ENCODE measurements at regions of chr1 and their contacts with region 1.

Region 1: GRCh38 chr1:201023517-201023902 is at the start of gene KIF21B:
- DNase-seq: peak; percentile 91
- H3K4me3 Mint-ChIP-seq: peak within 1 kb of the TSS; percentile 90
- H3K27ac Mint-ChIP-seq: peak within 1 kb of the TSS; percentile 100
- H3K4me1 Mint-ChIP-seq: peaks cover 72% of the 10 kb centered on the region
- H3K27me3 Mint-ChIP-seq: no peaks in the 10 kb centered on the region
- total RNA-seq, gene KIF21B: 45.5 to 46.3 TPM

Region 2: DNA sequence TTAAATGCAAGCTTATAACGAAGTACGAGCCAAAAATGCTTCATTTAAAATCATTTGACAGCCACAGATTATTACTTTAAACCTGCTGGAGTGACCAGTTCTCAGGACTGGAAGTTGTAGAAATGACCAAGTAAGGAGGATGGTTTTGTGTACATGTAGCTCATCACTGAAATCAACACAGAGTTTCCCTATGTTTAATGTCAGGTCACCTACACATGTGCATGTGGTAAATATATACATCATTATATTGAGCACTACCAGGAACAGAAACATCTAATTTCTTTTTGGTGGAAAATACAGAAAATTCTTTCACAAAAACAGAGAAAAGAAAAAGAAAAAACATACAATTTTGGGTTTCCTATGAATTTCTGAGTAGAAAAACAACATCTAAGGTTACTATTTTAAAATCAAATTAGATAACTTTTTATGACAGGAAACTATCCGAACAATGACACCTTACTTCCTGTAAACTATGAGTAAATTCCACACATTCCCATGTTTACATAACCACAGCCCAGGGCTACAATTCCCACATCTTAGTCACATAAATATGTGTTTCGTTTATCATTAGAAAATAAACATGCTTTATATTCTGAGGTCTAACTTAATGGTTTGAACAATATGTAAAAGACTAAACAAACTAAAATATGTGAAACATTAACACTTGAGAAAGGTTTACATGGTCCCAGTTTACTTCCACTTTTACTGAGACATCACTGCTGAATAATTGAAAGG is 687.2 kb before region 1 on chr1:
- CTCF ChIA-PET with region 1: no interaction called
- intact Hi-C with region 1: no loop called
- DNase-seq: no peak
- H3K4me3 Mint-ChIP-seq: no peak overlapping the region
- H3K27ac Mint-ChIP-seq: no peak overlapping the region
- H3K4me1 Mint-ChIP-seq: peaks cover 24% of the 10 kb centered on the region
- H3K27me3 Mint-ChIP-seq: no peaks in the 10 kb centered on the region

Region 3: DNA sequence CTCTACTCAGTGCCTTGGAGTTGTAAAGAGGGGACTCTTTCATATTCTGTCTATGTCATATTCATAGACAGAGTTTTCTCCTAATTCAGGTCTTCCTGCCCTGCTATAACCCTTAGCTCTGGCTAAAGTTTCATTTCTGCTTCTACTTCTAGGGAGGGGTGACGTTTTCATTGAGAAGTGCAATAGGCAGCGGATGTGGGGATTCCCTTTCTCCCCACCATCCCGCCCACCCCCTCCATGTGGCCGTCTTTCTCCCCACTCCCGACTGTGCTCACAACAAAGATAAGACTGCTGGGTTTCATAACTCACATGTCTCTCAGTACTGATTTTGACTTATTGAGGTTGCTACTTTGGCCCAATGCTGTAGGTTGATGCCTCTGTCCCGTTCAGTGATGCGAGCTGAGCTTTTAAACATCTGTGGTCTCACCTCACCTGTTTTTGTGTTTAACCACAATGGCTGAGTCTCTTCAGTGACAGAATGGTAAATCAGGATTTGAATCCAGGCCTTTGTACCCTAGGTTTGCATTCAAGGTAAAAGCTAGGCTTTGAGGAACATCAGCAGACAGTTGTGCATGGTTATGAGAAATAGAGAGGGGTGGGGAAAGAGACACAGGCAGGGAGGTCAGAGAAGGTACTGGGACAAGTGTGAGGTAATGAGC is 395.2 kb before region 1 on chr1:
- CTCF ChIA-PET with region 1: interaction called, 3 read pairs
- intact Hi-C with region 1: loop called (anchors 1 kb)
- DNase-seq: peak; percentile 43
- H3K4me3 Mint-ChIP-seq: no peak overlapping the region
- H3K27ac Mint-ChIP-seq: no peak overlapping the region
- H3K4me1 Mint-ChIP-seq: peaks cover 32% of the 10 kb centered on the region
- H3K27me3 Mint-ChIP-seq: no peaks in the 10 kb centered on the region

Region 4: GRCh38 chr1:200888349-200888838 is 135.1 kb before region 1 on chr1:
- CTCF ChIA-PET with region 1: interaction called, 3 read pairs
- intact Hi-C with region 1: loop called (anchors 1 kb)
- DNase-seq: peak; percentile 85
- H3K4me3 Mint-ChIP-seq: no peak overlapping the region
- H3K27ac Mint-ChIP-seq: no peak overlapping the region
- H3K4me1 Mint-ChIP-seq: peaks cover 46% of the 10 kb centered on the region
- H3K27me3 Mint-ChIP-seq: peaks cover 25% of the 10 kb centered on the region

Region 5: GRCh38 chr1:201001960-201002359 is 21.6 kb before region 1 on chr1:
- CTCF ChIA-PET with region 1: interaction called, 7 read pairs
- intact Hi-C with region 1: loop called (anchors 1 kb)
- DNase-seq: no peak
- H3K4me3 Mint-ChIP-seq: no peak overlapping the region
- H3K27ac Mint-ChIP-seq: peak overlapping the region; percentile 54
- H3K4me1 Mint-ChIP-seq: peaks cover 18% of the 10 kb centered on the region
- H3K27me3 Mint-ChIP-seq: no peaks in the 10 kb centered on the region

Region 6: GRCh38 chr1:201042779-201043461 is 19.4 kb after region 1 on chr1:
- CTCF ChIA-PET with region 1: interaction called, 29 read pairs
- intact Hi-C with region 1: loop called (anchors 1 kb)
- DNase-seq: peak; percentile 83
- H3K4me3 Mint-ChIP-seq: no peak overlapping the region
- H3K27ac Mint-ChIP-seq: no peak overlapping the region
- H3K4me1 Mint-ChIP-seq: no peaks in the 10 kb centered on the region
- H3K27me3 Mint-ChIP-seq: no peaks in the 10 kb centered on the region

Region 7: GRCh38 chr1:201170533-201171062 is 147.1 kb after region 1 on chr1:
- CTCF ChIA-PET with region 1: no interaction called
- intact Hi-C with region 1: loop called (anchors 1 kb)
- DNase-seq: peak; percentile 93
- H3K4me3 Mint-ChIP-seq: peak overlapping the region; percentile 76
- H3K27ac Mint-ChIP-seq: peak overlapping the region; percentile 85
- H3K4me1 Mint-ChIP-seq: peaks cover 21% of the 10 kb centered on the region
- H3K27me3 Mint-ChIP-seq: peaks cover 2% of the 10 kb centered on the region

Region 8: DNA sequence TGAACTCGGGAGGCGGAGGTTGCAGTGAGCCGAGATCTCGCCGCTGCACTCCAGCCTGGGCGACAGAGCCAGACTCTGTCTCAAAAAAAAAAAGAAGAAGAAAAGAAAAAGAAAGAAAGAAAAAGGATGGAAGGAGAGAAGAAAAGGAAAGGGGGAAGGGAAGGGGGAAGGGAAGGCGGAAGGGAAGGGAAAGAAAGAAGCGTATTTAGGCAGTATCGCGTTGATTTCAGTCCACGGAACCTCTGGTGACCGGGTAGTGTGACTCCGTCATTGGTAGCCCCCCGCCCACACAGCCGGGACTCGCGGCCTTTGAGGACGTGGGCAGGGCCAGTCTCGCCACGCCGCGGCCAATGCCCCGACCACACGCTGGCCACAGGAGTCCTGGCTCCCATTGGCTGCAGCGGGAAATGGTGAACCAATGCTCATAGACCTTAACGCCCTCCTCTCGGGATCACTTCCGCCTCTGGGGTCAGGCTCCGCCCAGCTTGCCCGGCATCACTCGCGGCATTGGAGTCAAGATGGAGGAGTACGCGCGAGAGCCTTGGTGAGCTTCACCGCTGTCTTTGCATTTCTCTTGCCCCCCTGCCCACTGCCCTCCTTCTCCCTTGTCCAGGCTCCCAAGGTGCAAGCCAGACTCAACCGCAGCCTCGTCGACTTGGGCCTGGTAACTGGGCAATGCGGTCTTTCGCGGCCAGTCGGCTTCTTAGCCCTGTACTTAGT is 931.7 kb after region 1 on chr1 and contains the start of gene TIMM17A:
- CTCF ChIA-PET with region 1: no interaction called
- intact Hi-C with region 1: loop called (anchors 2 kb)
- DNase-seq: peak; percentile 98
- H3K4me3 Mint-ChIP-seq: peak within 1 kb of the TSS; percentile 96
- H3K27ac Mint-ChIP-seq: peak within 1 kb of the TSS; percentile 92
- H3K4me1 Mint-ChIP-seq: peaks cover 20% of the 10 kb centered on the region
- H3K27me3 Mint-ChIP-seq: no peaks in the 10 kb centered on the region
- total RNA-seq, gene TIMM17A: 52.6 to 54.4 TPM

Measured in activated naive CD4-positive, alpha-beta T cell treated with anti-CD3 and anti-CD28 coated beads for 36 hours (primary cell).